Activated CD8-positive, alpha-beta memory T cell treated with anti-CD3 and anti-CD28 coated beads, Interleukin-2, amount 10 ng/mL, durations not matched to agents 7 days and 5 days (primary cell): ENCODE measurements at regions of chr12 and their contacts with region 1.

Region 1: GRCh38 chr12:127108360-127109215 is 1158.4 kb upstream of the TMEM132C start:
- DNase-seq: peak; percentile 65
- ATAC-seq: no peak
- H3K4me3 Mint-ChIP-seq: no peak overlapping the region
- H3K27ac Mint-ChIP-seq: no peak overlapping the region
- H3K4me1 Mint-ChIP-seq: peaks cover 3% of the 10 kb centered on the region
- H3K27me3 Mint-ChIP-seq: peaks cover 26% of the 10 kb centered on the region

Region 2: DNA sequence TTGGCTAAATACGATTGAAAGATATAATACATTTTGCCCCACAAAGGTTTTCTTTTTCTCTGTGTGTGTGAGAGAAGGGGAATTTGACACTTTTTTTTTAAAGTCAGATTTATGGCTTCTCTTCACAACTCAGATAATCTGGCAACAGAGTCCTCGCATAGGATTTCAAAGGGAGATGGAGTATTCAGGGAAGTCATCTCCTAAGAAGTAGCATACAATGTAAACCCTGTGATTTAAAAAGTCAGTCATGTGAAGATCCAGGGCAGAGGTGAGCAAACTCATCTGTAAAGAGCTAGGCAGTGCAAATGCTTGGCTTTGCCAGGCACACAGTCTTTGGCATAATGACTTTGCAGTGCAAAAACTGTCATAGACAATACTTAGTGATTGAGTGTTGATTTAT is 517.1 kb before region 1 on chr12:
- CTCF ChIA-PET with region 1: no interaction called
- DNase-seq: no peak
- ATAC-seq: no peak
- H3K4me3 Mint-ChIP-seq: no peak overlapping the region
- H3K27ac Mint-ChIP-seq: no peak overlapping the region
- H3K4me1 Mint-ChIP-seq: peaks cover 20% of the 10 kb centered on the region
- H3K27me3 Mint-ChIP-seq: no peaks in the 10 kb centered on the region

Region 3: GRCh38 chr12:126926023-126926594 is 182.5 kb before region 1 on chr12:
- CTCF ChIA-PET with region 1: no interaction called
- DNase-seq: no peak
- ATAC-seq: no peak
- H3K4me3 Mint-ChIP-seq: no peak overlapping the region
- H3K27ac Mint-ChIP-seq: no peak overlapping the region
- H3K4me1 Mint-ChIP-seq: no peaks in the 10 kb centered on the region
- H3K27me3 Mint-ChIP-seq: no peaks in the 10 kb centered on the region

Region 4: DNA sequence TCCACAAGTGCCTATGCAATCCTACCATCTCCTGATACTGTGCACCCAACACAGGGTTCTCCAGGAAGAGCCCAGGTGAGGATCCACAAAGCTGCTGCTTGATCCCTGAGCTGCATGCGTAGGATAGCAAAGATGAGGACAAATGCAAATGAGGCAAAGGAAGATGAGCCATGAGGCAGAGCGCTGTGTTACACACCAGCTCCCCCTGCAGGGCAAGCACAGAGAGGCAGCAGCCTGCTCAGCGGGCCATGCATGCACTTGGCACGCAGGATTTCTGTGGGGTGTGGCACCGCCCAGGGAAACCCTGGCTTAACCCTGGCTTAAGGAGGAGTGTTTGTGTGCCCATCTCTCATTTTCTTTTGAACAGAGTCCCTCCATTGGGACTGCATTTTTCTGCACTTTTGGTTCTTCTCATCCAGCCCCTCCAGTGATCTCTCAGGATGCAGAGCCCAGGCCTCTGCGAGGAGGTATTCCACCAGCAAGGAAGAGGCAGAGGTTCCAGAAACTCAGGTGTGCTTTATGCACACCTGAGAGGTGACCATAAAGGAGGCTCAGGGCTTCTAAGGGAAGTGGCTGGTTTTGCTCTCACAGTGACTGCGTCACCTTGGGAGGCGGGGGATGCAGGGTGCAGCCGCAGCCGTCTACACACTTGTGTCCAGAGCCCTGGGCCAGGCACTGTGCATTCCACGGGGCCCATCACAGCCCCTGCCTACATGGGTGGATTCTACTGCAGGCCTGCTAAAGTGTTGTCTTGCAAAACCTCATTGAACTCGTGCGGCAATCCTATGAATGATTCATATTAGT is 185.1 kb after region 1 on chr12:
- CTCF ChIA-PET with region 1: interaction called, 26 read pairs
- DNase-seq: peak; percentile 62
- ATAC-seq: peak; percentile 78
- H3K4me3 Mint-ChIP-seq: no peak overlapping the region
- H3K27ac Mint-ChIP-seq: no peak overlapping the region
- H3K4me1 Mint-ChIP-seq: no peaks in the 10 kb centered on the region
- H3K27me3 Mint-ChIP-seq: no peaks in the 10 kb centered on the region

Region 5: DNA sequence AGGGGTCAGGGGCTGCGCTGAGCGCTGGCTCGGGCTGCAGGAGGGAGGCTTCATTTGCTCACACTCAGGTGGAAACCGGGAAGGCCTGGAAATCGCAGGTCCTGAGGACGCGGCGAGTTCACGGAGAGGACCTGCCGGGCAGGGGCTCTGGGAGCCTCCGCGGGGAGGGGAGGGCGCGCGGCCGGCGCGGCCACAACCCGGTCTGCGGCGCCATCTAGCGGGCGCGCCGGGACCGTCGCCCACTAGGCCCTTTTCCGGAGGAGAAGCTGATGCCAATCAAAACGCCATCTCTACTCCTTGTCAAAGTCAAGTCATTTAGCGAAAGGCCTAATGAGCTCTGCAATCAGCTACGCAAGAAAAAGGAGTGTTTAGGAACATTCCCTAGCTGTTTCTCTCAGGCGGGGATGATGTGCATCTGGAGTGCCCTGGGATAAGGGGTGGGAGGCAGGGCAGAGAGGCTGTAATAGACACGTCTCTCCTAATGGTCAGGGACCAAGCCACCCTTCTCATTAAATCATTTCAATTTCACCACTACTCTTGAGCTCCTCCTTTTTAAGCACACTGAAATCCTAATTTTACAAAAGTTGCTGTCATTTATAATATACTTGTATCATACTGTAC is 272.6 kb after region 1 on chr12:
- CTCF ChIA-PET with region 1: interaction called, 20 read pairs
- DNase-seq: peak; percentile 43
- ATAC-seq: peak; percentile 79
- H3K4me3 Mint-ChIP-seq: peak overlapping the region; percentile 22
- H3K27ac Mint-ChIP-seq: no peak overlapping the region
- H3K4me1 Mint-ChIP-seq: peaks cover 1% of the 10 kb centered on the region
- H3K27me3 Mint-ChIP-seq: peaks cover 5% of the 10 kb centered on the region

Region 6: GRCh38 chr12:127401005-127401404 is 292.4 kb after region 1 on chr12:
- CTCF ChIA-PET with region 1: no interaction called
- DNase-seq: no peak
- ATAC-seq: no peak
- H3K4me3 Mint-ChIP-seq: no peak overlapping the region
- H3K27ac Mint-ChIP-seq: no peak overlapping the region
- H3K4me1 Mint-ChIP-seq: no peaks in the 10 kb centered on the region
- H3K27me3 Mint-ChIP-seq: peaks cover 2% of the 10 kb centered on the region